ENCODE measurements at regions of chr7 and their contacts with region 1.

Region 1: DNA sequence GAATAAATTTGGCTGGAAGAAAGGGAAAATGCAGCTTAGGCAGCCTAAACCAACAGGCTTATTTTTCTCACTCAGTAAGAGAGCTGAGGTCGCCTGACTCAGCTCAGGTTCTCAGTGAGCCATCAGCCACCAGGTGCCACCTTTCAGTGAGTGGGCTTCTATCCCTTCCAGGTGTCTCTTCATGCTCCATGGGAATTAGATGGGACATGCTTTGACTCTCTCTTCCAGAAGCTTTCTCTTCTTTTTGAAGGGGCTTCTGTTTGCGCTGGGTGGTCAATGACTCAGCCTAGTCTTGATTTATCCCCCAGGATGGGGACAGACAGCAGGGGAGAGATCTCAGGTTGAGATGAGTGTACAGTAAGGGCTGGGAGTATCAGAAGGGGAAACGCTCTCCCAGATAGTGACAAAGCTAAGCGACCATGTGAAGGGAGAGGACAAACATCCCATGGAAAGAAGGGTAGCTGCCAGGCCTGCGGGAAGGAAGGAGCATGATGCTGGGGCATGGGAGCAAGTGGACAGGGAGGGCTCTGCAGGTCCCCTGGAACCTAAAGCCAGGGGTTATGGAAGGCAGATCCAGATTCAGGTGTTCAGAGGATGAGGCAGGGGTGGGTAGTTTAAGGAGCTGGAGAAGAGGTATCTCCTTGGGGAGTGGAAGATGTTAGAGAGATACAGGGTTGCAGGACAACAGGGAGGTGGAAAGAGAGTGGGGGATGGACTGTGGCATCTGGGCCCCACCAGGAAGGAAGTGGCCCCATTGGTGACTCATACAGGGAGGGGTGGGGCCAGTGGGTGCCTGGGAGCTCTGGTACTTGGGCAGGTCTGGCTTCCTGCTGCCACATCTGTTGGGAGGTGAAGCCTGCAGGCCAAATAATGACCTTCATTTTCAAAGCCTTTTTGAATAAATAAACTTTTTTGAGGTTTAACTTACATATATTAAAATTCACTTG is 32.5 kb downstream of the OGDH start:
- DNase-seq: peak; percentile 93
- H3K4me3 Mint-ChIP-seq: peak overlapping the region; percentile 73
- H3K27ac Mint-ChIP-seq: peak overlapping the region; percentile 100
- H3K4me1 Mint-ChIP-seq: peaks cover 83% of the 10 kb centered on the region
- H3K27me3 Mint-ChIP-seq: no peaks in the 10 kb centered on the region

Region 2: GRCh38 chr7:44490351-44491200 is 148.3 kb before region 1 on chr7 and contains the start of gene NUDCD3:
- CTCF ChIA-PET with region 1: no interaction called
- POLR2A ChIA-PET with region 1: interaction called, 12 read pairs
- DNase-seq: peak; percentile 86
- H3K4me3 Mint-ChIP-seq: peak within 1 kb of the TSS; percentile 81
- H3K27ac Mint-ChIP-seq: peak within 1 kb of the TSS; percentile 85
- H3K4me1 Mint-ChIP-seq: peaks cover 43% of the 10 kb centered on the region
- H3K27me3 Mint-ChIP-seq: peaks cover 5% of the 10 kb centered on the region
- total RNA-seq, gene NUDCD3: 91.0 to 97.5 TPM

Region 3: GRCh38 chr7:44581879-44582603 is 56.8 kb before region 1 on chr7 and contains the start of gene TMED4:
- CTCF ChIA-PET with region 1: interaction called, 9 read pairs
- POLR2A ChIA-PET with region 1: interaction called, 96 read pairs
- DNase-seq: peak; percentile 100
- H3K4me3 Mint-ChIP-seq: peak within 1 kb of the TSS; percentile 92
- H3K27ac Mint-ChIP-seq: peak within 1 kb of the TSS; percentile 85
- H3K4me1 Mint-ChIP-seq: peaks cover 42% of the 10 kb centered on the region
- H3K27me3 Mint-ChIP-seq: no peaks in the 10 kb centered on the region
- total RNA-seq, gene TMED4: 76.0 to 81.8 TPM

Region 4: GRCh38 chr7:44622307-44623151 is 16.4 kb before region 1 on chr7:
- CTCF ChIA-PET with region 1: interaction called, 22 read pairs
- POLR2A ChIA-PET with region 1: interaction called, 1,257 read pairs
- DNase-seq: peak; percentile 64
- H3K4me3 Mint-ChIP-seq: peak overlapping the region; percentile 54
- H3K27ac Mint-ChIP-seq: peak overlapping the region; percentile 91
- H3K4me1 Mint-ChIP-seq: peaks cover 93% of the 10 kb centered on the region
- H3K27me3 Mint-ChIP-seq: no peaks in the 10 kb centered on the region

Region 5: DNA sequence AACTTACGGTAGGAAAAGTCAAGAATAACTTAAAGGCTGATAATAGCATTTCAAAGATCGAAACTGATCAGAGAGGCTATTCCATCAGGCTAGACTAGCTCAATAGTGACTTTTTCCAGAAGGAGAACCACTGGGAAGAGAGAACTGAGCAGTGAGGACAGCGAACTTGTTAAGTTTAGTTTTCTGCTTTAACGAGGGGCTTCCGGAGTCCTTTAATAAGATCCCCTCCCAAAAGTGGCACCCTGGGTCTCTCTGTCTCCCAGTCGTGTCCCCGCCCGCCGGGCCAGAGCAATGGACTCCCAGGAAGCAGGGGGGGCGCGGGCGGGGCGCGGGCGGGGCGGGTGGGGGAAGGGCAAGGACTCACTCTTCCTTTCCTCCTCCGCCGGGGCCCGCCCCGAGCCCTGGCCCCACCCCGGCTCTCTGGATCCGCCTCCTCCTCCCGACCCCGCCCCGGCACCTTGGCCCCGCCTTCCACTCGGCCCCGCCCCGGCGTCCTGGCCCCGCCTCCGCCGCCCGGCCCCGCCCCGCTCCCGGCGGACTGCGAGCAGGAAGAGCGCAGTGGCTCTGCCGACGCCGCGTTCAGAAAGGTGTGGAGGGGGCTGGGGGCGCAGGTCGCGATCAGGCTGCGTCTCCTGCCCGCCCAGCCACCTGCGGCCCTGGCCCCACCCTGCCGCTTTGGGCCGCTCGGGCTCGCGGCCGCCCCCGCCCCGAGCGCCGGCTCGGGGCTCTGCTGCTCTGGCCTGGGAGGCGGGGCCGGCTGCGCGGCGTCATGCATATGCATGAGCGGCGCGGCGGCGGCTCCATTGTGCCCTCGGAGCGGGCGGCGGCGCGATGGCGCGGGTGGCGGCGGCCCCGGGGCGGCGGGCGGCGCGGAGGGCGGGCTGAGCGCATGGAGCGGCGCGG is 109.4 kb after region 1 on chr7 and contains the start of gene ZMIZ2:
- CTCF ChIA-PET with region 1: no interaction called
- POLR2A ChIA-PET with region 1: interaction called, 24 read pairs
- DNase-seq: peak; percentile 92
- H3K4me3 Mint-ChIP-seq: peak within 1 kb of the TSS; percentile 84
- H3K27ac Mint-ChIP-seq: peak within 1 kb of the TSS; percentile 66
- H3K4me1 Mint-ChIP-seq: peaks cover 43% of the 10 kb centered on the region
- H3K27me3 Mint-ChIP-seq: no peaks in the 10 kb centered on the region
- total RNA-seq, gene ZMIZ2: 85.2 to 91.4 TPM

Region 6: DNA sequence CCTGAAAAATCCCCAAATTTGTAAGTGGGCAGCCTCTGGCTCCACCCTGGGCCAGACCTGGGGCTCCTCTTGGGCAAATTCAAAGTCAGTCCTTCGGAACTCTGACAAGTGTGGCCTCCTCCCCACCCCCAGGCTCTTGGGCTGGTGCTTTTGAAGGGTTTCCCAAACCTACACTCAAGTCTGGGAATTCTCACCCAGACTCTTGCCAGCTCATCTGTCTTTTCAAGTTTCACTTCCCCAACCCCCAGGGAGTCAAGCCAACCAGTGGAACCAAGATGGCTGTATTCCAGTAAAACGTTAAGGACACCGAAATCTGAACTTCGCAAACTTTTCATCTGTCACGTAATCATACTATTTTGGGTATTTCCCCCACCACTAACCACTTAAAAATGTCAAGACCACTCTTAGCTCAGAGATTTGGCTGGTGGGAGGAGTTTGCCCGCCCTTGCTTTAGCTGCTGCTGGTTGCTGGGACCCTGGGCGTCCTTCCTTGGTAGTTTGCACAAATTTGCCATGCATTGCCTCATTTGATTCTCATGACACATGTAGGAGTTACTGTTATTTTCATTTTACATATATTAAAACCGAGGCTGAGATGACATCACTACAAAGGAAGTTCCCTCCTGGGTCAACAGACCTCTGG is 341.6 kb after region 1 on chr7:
- CTCF ChIA-PET with region 1: no interaction called
- POLR2A ChIA-PET with region 1: interaction called, 20 read pairs
- DNase-seq: peak; percentile 75
- H3K4me3 Mint-ChIP-seq: peak overlapping the region; percentile 99
- H3K27ac Mint-ChIP-seq: peak overlapping the region; percentile 96
- H3K4me1 Mint-ChIP-seq: peaks cover 76% of the 10 kb centered on the region
- H3K27me3 Mint-ChIP-seq: no peaks in the 10 kb centered on the region

Measured in activated CD4-positive, alpha-beta memory T cell treated with anti-CD3 and anti-CD28 coated beads, Interleukin-2, amount 10 ng/mL, durations not matched to agents 7 days and 5 days (primary cell).